WTC11 (cell line): ENCODE measurements at regions of chr7 and their contacts with region 1.

Region 1: DNA sequence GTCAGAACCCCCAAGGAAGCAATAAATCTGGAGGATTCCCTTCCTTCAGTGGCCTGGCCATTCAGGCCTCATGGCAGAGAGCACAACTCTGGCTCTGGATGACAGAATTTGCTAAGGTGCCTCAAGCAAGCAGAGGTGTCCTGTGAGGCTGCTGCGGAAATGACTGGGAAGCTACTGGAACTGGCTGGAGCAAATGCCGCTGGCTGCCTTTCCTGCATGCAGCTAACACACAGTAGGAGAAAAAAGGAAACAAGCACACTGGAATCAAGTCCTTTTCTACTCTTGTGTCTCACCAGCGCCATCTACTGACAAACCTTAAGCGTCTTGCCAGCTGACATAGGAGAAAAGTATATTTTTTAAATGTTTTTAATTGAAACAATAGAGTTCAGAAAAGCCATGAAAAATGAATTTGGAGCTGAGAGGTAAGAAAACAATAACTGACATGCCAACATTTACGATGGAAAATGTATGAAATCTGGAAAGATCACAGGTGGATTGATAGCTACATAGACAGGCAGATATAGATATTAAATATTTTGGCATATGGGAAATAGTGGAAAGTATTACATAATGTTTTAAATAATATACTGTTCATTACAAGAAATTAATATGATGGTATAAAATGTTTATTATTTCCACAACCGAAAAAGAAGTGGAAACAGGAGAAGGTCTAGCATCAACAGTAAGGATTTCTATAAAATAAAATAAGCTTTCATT is 951.6 kb downstream of the ANKRD7 start:
- DNase-seq: peak; percentile 78
- ATAC-seq: peak; percentile 100
- H3K4me3 Mint-ChIP-seq: no peak overlapping the region
- H3K27ac Mint-ChIP-seq: peak overlapping the region; percentile 87
- H3K4me1 Mint-ChIP-seq: peaks cover 23% of the 10 kb centered on the region
- H3K27me3 Mint-ChIP-seq: no peaks in the 10 kb centered on the region
- CTCF ChIP-seq: peak; percentile 70

Region 2: GRCh38 chr7:118918556-118918955 is 257.5 kb before region 1 on chr7:
- CTCF ChIA-PET with region 1: interaction called, 15 read pairs
- POLR2A ChIA-PET with region 1: no interaction called
- DNase-seq: no peak
- ATAC-seq: no peak
- H3K4me3 Mint-ChIP-seq: no peak overlapping the region
- H3K27ac Mint-ChIP-seq: no peak overlapping the region
- H3K4me1 Mint-ChIP-seq: no peaks in the 10 kb centered on the region; the same call in 1 of the 2 replicates
- H3K27me3 Mint-ChIP-seq: no peaks in the 10 kb centered on the region
- CTCF ChIP-seq: no peak

Region 3: GRCh38 chr7:119102294-119102693 is 73.8 kb before region 1 on chr7:
- CTCF ChIA-PET with region 1: interaction called, 13 read pairs
- POLR2A ChIA-PET with region 1: no interaction called
- DNase-seq: no peak
- ATAC-seq: no peak
- H3K4me3 Mint-ChIP-seq: no peak overlapping the region
- H3K27ac Mint-ChIP-seq: 0 out of 2 replicates have a peak overlapping the region, but pooled peaks have one; percentile 23
- H3K4me1 Mint-ChIP-seq: peaks cover 64% of the 10 kb centered on the region
- H3K27me3 Mint-ChIP-seq: no peaks in the 10 kb centered on the region
- CTCF ChIP-seq: no peak

Region 4: GRCh38 chr7:119197877-119198527 is 21.9 kb after region 1 on chr7:
- CTCF ChIA-PET with region 1: interaction called, 14 read pairs
- POLR2A ChIA-PET with region 1: no interaction called
- DNase-seq: peak; percentile 41
- ATAC-seq: peak; percentile 93
- H3K4me3 Mint-ChIP-seq: no peak overlapping the region
- H3K27ac Mint-ChIP-seq: no peak overlapping the region
- H3K4me1 Mint-ChIP-seq: peaks cover 23% of the 10 kb centered on the region
- H3K27me3 Mint-ChIP-seq: no peaks in the 10 kb centered on the region
- CTCF ChIP-seq: peak; percentile 66; the same call in 1 of the 2 replicates